Colonic mucosa (tissue), 4 donors: ENCODE measurements at regions of chr9 and their contacts with region 1.

Region 1: GRCh38 chr9:87678650-87679515 is 47.0 kb upstream of the CTSL start:
- DNase-seq: peak; percentile 66
- H3K4me3 ChIP-seq: no peak overlapping the region
- H3K27ac ChIP-seq: no peak overlapping the region
- H3K4me1 ChIP-seq: no peaks in the 10 kb centered on the region
- H3K27me3 ChIP-seq: no peaks in the 10 kb centered on the region
- CTCF ChIP-seq: peak; percentile 71

Region 2: DNA sequence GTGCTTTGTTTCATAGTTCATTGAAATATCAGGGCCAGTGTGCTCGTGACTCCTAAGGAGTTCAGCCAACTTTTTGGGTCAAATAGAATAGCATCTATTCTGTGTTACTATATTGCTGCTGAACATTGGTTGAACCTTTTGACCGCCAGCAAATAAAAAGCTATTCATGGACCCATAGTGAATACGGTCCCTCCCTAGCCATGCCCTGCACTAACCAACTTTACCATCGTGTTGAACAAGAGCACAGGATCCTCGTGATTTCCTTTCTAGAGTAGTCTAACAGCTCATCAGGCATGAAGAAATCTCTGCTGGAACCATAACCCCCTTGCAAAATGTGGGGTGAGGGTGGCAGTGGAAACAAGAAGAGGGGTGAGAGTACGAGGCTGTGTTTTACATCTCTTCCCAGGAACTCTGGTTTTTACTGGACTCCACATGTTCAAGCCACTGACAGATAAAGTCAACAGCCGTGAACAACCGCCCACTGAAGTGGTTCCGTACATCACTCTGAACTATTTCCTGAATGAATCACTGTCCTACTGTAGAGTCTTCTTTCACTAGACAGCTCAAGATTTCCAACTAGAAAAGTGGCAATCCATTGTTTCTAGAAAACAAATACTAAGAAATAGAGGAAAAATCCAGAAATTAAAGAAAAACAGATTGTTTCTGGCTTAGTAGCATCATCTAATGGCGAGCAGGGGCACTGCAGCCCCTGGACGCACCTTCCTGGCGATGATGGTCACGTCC is 133.7 kb after region 1 on chr9:
- intact Hi-C with region 1: loop called (anchors 5 kb)
- DNase-seq: no peak
- H3K4me3 ChIP-seq: no peak overlapping the region
- H3K27ac ChIP-seq: no peak overlapping the region
- H3K4me1 ChIP-seq: no peaks in the 10 kb centered on the region
- H3K27me3 ChIP-seq: no peaks in the 10 kb centered on the region
- CTCF ChIP-seq: peak; percentile 63

Region 3: GRCh38 chr9:89000973-89001916 is 1322.4 kb after region 1 on chr9:
- intact Hi-C with region 1: loop called (anchors 5 kb)
- DNase-seq: peak; percentile 89
- H3K4me3 ChIP-seq: no peak overlapping the region
- H3K27ac ChIP-seq: no peak overlapping the region
- H3K4me1 ChIP-seq: no peaks in the 10 kb centered on the region
- H3K27me3 ChIP-seq: no peaks in the 10 kb centered on the region
- CTCF ChIP-seq: peak; percentile 76